HepG2 (cell line): ENCODE measurements at regions of chr6 and their contacts with region 1.

Region 1: DNA sequence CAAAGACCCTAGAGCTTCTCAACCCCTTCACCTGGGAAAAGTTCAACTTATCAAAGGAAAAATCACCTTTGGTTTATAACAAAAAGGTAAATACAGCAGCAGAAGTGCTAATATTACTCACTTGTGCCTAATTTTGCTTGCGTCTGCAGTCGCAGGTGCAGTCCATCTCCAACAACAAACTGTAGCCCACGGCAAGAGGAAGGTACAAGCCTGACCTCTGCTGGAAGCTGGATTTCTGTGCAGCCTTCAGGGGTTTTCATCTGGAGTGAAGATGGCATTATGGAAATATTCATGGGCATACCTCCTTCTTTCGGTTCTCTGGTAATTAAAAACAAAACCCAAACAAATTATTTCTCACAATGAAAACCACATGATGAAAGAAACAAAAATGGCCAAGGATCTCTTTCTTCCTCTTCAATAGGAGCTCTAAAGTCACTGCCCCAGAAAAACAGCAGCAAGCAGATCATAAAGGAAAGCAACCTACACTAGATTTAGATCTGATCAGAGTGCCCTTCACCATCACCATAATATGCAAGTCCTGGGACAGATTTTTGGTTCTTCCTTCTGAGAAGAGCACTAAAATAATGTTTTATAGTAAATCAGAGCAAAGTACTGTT is 7.8 kb downstream of the UBE3D start:
- DNase-seq: peak; percentile 42
- ATAC-seq: peak; percentile 90
- H3K4me3 ChIP-seq: no peak overlapping the region
- H3K27ac ChIP-seq: no peak overlapping the region
- H3K4me1 ChIP-seq: no peaks in the 10 kb centered on the region
- H3K27me3 ChIP-seq: no peaks in the 10 kb centered on the region
- CTCF ChIP-seq: peak; percentile 76
- EP300 ChIP-seq: no peak
- POLR2A ChIP-seq: no peak
- RAD21 ChIP-seq: peak; percentile 37; the same call in 1 of the 2 replicates

Region 2: GRCh38 chr6:82363351-82364086 is 694.3 kb before region 1 on chr6 and contains the start of gene TPBG:
- CTCF ChIA-PET with region 1: interaction called, 3 read pairs
- POLR2A ChIA-PET with region 1: no interaction called
- in situ Hi-C with region 1: loop called (anchors 10 kb)
- intact Hi-C with region 1: loop called (anchors 1 kb)
- DNase-seq: peak; percentile 27
- ATAC-seq: peak; percentile 90
- H3K4me3 ChIP-seq: peak within 1 kb of the TSS; percentile 51 to 73 (median 63)
- H3K27ac ChIP-seq: no peak within 1 kb of the TSS
- H3K4me1 ChIP-seq: peaks cover 5% of the 10 kb centered on the region; the same call in 1 of the 2 replicates
- H3K27me3 ChIP-seq: peaks cover 0 to 22% of the 10 kb centered on the region in 2 experiments; a peak in 2 of 5 replicates
- CTCF ChIP-seq: peak; percentile 59
- EP300 ChIP-seq: no peak
- POLR2A ChIP-seq: no peak
- RAD21 ChIP-seq: 0 out of 2 replicates have a peak, but pooled peaks have one; percentile 18
- total RNA-seq, gene TPBG: 0.39 and 0.75 TPM in 2 replicates

Region 3: DNA sequence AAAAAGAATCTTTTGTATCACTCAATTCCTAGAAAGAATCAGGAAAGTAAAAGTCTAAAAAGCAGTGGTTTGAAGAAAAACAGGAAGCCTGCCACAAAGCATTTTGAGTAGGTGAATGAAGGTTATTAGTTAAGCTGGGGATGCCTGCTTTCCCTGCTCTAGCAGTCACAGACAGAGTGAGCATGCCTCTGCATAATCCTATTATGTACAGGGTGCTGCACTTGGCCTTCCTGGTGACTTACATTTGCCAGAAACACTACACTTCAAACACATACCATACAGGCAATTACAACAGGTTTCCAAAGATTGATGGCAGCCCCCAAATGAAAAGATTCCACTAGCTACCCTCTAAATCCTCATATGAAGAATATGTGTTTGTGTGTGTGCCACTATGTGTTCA is 563.4 kb before region 1 on chr6:
- CTCF ChIA-PET with region 1: no interaction called
- POLR2A ChIA-PET with region 1: no interaction called
- in situ Hi-C with region 1: no loop called
- intact Hi-C with region 1: loop called (anchors 10 kb)
- DNase-seq: no peak
- ATAC-seq: no peak
- H3K4me3 ChIP-seq: no peak overlapping the region
- H3K27ac ChIP-seq: no peak overlapping the region
- H3K4me1 ChIP-seq: no peaks in the 10 kb centered on the region
- H3K27me3 ChIP-seq: no peaks in the 10 kb centered on the region
- CTCF ChIP-seq: no peak
- EP300 ChIP-seq: no peak
- POLR2A ChIP-seq: no peak
- RAD21 ChIP-seq: no peak

Region 4: GRCh38 chr6:82783587-82784236 is 274.1 kb before region 1 on chr6:
- CTCF ChIA-PET with region 1: no interaction called
- POLR2A ChIA-PET with region 1: no interaction called
- in situ Hi-C with region 1: no loop called
- intact Hi-C with region 1: loop called (anchors 10 kb)
- DNase-seq: peak; percentile 2
- ATAC-seq: peak; percentile 99
- H3K4me3 ChIP-seq: no peak overlapping the region
- H3K27ac ChIP-seq: no peak overlapping the region
- H3K4me1 ChIP-seq: no peaks in the 10 kb centered on the region
- H3K27me3 ChIP-seq: no peaks in the 10 kb centered on the region
- CTCF ChIP-seq: no peak
- EP300 ChIP-seq: no peak
- POLR2A ChIP-seq: no peak
- RAD21 ChIP-seq: no peak

Region 5: GRCh38 chr6:82818727-82819126 is 239.1 kb before region 1 on chr6:
- CTCF ChIA-PET with region 1: no interaction called
- POLR2A ChIA-PET with region 1: no interaction called
- in situ Hi-C with region 1: no loop called
- intact Hi-C with region 1: no loop called
- DNase-seq: no peak
- ATAC-seq: no peak
- H3K4me3 ChIP-seq: no peak overlapping the region
- H3K27ac ChIP-seq: no peak overlapping the region
- H3K4me1 ChIP-seq: no peaks in the 10 kb centered on the region
- H3K27me3 ChIP-seq: no peaks in the 10 kb centered on the region
- CTCF ChIP-seq: no peak
- EP300 ChIP-seq: no peak
- POLR2A ChIP-seq: no peak
- RAD21 ChIP-seq: no peak

Region 6: DNA sequence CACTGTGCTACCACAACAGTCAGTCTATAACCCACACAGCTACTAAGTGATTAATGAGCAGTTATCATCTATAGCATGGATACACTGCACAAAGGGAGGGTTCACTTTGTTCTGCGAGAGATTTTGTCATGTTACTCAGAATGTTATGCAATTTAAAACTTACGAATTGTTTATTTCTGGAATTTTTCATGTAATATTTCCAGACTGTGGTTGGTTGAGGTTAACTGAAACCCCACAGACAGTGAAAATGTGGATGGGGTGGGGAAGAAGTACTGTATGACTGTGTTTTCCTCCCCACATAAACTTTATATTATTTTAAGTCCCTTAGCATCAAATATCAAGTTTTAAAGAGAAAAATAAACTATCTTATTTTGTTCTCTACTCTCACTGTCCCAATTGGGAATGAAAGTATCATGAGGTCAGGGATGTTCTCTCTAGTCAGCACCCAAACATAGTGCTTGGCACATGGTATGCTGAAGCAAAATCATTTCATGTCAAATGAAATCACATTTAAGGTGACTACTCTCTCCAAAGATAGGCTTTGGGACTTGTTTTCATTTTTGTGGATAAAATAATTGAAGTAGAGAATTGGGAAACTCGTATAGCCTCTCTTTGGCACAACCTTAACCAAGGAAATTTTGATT is 35.1 kb after region 1 on chr6:
- CTCF ChIA-PET with region 1: no interaction called
- POLR2A ChIA-PET with region 1: no interaction called
- in situ Hi-C with region 1: no loop called
- intact Hi-C with region 1: no loop called
- DNase-seq: no peak
- ATAC-seq: no peak
- H3K4me3 ChIP-seq: no peak overlapping the region
- H3K27ac ChIP-seq: no peak overlapping the region
- H3K4me1 ChIP-seq: no peaks in the 10 kb centered on the region
- H3K27me3 ChIP-seq: no peaks in the 10 kb centered on the region
- CTCF ChIP-seq: no peak
- EP300 ChIP-seq: no peak
- POLR2A ChIP-seq: no peak
- RAD21 ChIP-seq: no peak